ENCODE measurements at regions of chr12 and their contacts with region 1.

Region 1: DNA sequence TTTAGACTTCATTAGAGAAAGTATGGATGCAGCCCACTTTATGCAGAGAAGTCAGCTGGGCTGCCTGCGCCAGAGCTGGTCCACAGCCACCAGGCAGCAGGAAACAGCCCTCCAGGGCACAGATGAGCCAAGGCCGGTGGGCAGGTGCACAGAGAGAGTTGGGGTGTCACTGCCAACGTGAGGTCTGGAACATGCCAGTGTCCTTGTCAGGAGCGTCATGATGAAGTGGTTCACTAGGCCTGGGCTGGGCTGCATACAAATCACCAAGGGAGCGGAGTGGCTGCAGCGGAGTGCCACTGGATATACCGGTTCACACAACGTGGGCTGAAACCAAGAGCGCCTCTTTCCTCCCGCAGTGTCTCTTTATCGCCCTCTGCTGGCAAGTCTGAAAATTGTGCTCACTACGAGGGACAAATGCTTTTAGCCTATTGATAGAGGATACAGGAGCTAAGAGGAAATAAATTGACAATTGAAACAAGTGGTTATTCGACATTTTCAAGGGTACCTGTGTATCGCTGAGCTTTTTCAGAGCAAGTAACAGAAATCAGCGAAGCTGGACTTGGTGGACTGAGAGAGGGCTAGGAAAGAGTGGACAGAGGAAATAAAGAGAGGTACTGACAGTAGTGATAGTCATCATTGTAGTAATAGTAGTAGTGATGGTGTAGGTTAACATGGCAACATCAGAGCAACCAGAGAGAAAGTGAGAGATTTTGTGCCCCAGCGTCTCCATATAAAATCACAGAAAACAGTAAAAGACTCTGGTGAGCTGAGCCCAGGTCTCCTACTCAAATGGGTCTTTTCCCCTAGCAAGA is 52.0 kb upstream of the ITPR2 start:
- DNase-seq: peak; percentile 55
- H3K27ac ChIP-seq: no peak overlapping the region
- CTCF ChIP-seq: peak; percentile 80

Region 2: DNA sequence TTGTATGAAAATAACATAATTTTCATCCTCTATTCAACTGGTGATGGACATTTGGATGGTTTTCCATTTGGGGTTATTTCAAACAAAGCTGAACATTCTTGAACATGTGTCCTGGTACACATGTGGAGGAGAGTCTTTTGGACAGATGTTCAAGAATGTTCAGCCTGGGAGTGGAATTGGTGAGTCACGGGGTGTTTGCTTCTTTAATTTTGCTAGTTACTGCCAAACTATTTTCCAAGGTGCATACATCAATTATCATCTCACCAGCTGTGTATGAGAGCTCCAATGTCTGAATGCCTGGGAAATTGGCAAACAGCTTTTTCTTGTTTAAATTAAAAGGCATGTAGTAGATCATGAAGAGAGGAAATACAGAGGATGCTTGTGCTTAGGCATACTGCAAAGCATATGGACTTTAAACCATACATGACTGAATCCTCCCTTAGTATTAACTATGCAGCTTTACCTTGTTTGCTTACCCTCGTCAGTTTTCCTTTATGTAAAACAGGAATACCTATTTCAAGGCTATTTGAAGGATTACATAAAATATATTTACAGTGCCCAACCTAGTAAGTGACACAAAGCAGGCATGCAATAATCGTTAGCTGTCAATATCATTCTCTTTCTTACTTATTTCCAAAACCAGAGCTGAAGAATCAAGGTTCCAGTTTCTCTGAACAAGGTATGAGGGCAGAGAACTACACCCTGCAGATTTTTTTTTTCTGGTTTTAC is 204.1 kb before region 1 on chr12:
- CTCF ChIA-PET with region 1: no interaction called
- POLR2A ChIA-PET with region 1: no interaction called
- DNase-seq: peak; percentile 10
- H3K27ac ChIP-seq: no peak overlapping the region
- CTCF ChIP-seq: no peak

Region 3: GRCh38 chr12:26854031-26854390 is 31.0 kb before region 1 on chr12:
- CTCF ChIA-PET with region 1: interaction called, 10 read pairs
- POLR2A ChIA-PET with region 1: no interaction called
- DNase-seq: no peak
- H3K27ac ChIP-seq: no peak overlapping the region
- CTCF ChIP-seq: peak; percentile 9; the same call in 1 of the 2 replicates